ENCODE measurements at regions of chr5 and their contacts with region 1.

Region 1: DNA sequence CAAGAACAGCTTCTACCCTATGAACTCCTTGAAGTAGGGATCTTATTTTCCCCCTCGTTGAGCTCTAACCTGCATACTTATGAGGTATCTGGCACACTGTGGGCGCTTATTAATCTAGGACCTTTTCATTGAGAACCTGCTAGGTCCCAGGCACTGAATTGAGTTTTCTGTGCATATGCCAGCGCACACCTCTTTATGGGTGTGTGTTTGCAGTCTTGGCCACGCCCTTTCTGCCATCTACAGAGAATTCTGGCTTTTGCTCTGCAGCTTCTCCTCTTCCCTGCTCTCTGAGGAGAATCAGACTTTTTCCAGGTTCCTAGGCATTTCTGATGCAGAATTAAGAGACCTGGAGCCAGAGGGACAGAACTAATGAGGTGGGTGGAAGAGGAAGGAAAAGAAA is 25.4 kb upstream of the SSBP2 start:
- DNase-seq: no peak
- H3K4me3 ChIP-seq: no peak overlapping the region
- H3K27ac ChIP-seq: no peak overlapping the region
- H3K4me1 ChIP-seq: peaks cover 0 to 22% (median 18%) of the 10 kb centered on the region in 4 donors
- H3K27me3 ChIP-seq: no peaks in the 10 kb centered on the region
- CTCF ChIP-seq: no peak
- EP300 ChIP-seq: no peak
- POLR2A ChIP-seq: no peak

Region 2: GRCh38 chr5:81194633-81195333 is 581.5 kb before region 1 on chr5:
- intact Hi-C with region 1: no loop called
- DNase-seq: peak; percentile 85
- H3K4me3 ChIP-seq: no peak overlapping the region
- H3K27ac ChIP-seq: no peak overlapping the region
- H3K4me1 ChIP-seq: peaks cover 0 to 10% (median 7%) of the 10 kb centered on the region in 4 donors
- H3K27me3 ChIP-seq: no peaks in the 10 kb centered on the region
- CTCF ChIP-seq: peak; percentile 49 to 84 (median 58)
- EP300 ChIP-seq: no peak
- POLR2A ChIP-seq: no peak

Region 3: DNA sequence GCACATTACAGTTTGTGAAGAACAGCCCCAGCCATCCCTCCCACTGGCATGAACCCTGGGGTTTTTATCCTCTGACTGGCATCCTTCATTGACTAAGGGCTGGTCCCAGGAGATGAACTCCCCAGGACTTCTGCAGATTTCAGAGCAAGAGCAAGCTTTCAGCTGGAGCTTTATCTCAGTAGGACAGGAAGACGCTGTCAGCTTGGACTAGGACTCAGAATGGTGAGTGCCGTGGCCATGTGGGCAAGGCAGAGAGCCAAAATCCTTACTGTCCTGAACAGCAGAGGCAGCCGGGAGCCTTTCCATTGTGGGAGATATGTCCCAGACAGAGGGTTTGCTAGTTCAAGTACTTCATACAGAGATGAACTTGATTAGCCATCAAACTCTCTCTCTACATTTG is 379.1 kb before region 1 on chr5:
- intact Hi-C with region 1: no loop called
- DNase-seq: no peak
- H3K4me3 ChIP-seq: no peak overlapping the region
- H3K27ac ChIP-seq: no peak overlapping the region
- H3K4me1 ChIP-seq: peaks cover 0 to 15% (median 11%) of the 10 kb centered on the region in 4 donors
- H3K27me3 ChIP-seq: peaks cover 0 to 31% (median 23%) of the 10 kb centered on the region in 3 donors
- CTCF ChIP-seq: no peak
- EP300 ChIP-seq: no peak
- POLR2A ChIP-seq: no peak

Region 4: GRCh38 chr5:81759632-81760005 is 16.6 kb before region 1 on chr5:
- intact Hi-C with region 1: loop called (anchors 2 kb)
- DNase-seq: no peak
- H3K4me3 ChIP-seq: no peak overlapping the region
- H3K27ac ChIP-seq: peak overlapping the region in 3 of 4 donors; percentile 5 to 43 (median 22)
- H3K4me1 ChIP-seq: peaks cover 0 to 21% (median 15%) of the 10 kb centered on the region in 4 donors
- H3K27me3 ChIP-seq: no peaks in the 10 kb centered on the region
- CTCF ChIP-seq: no peak
- EP300 ChIP-seq: no peak
- POLR2A ChIP-seq: no peak

Region 5: DNA sequence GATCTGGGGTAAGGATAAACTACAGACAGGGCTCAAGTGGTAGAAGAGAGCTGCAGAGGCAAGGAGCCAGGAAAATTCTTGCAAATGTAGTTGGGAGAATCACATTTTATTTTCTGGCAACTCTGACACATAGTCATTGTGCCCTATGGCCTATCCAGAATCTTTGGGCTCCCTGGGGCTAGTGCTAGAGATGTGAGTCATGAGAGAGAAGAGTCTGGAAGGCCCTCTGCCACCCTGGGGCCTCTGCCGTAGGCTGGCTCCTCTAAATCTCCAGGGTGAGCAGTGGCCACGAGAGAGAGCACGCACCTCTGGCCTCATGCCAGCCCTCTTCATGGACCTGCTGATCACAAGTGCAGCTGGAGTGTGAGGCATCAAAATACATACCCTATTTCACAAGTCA is 49.0 kb after region 1 on chr5:
- intact Hi-C with region 1: no loop called
- DNase-seq: peak; percentile 78
- H3K4me3 ChIP-seq: no peak overlapping the region
- H3K27ac ChIP-seq: peak overlapping the region in 3 of 4 donors; percentile 45 to 53 (median 53)
- H3K4me1 ChIP-seq: peaks cover 0 to 15% (median 9%) of the 10 kb centered on the region in 4 donors
- H3K27me3 ChIP-seq: no peaks in the 10 kb centered on the region
- CTCF ChIP-seq: no peak
- EP300 ChIP-seq: no peak
- POLR2A ChIP-seq: no peak

Measured in sigmoid colon (tissue), 7 donors.